Activated T-helper 2 cell treated with anti-CD3 and anti-CD28 coated beads, Interferon-gamma antibody, Interleukin-2, Interleukin-4, amounts not matched to agents 10 μg/mL and 5 μg/mL and 100 μg/mL, durations not matched to agents 14 hours and 24 hours and 36 hours (primary cell): ENCODE measurements at regions of chr15 and their contacts with region 1.

Region 1: DNA sequence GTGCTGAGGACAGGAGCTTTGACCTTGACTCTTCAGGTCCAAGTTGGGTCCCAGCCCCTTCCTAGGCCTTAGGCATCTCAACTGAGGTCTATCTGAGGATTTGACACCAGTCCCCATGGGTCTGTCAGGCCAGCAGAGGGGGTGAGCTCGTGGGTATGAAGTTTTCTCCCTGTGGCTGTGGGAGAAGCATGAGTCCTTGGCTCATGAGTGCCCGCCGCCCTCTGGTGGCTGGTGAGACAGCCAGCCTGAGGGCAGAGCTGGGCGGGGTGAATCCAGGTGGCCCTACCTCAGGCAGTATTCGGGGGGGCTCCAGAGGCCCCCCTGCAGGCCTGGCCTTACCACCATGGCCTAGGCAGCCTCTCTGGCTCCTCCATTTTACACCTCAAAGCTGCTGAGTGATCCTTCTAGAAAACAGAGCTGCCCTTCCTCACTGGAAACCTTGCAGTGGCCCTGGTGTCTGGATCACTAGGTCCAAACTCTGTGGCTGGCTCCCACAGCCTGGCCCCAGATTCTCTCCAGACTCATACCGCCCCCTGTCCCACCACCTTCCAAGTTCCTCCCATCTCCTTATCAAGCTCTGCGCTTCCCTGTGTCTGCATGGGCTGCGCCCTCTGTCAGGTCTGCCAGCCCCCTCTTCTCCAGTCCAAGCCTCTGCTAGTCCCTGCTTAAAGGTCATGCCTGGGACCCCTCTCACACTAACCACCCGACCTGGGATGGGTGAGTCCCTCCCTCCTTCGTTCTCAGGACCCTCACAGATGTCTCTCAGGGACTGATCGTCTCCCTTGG is 16.1 kb downstream of the SH2D7 start:
- DNase-seq: peak; percentile 75
- H3K4me3 Mint-ChIP-seq: no peak overlapping the region
- H3K27ac Mint-ChIP-seq: no peak overlapping the region
- H3K4me1 Mint-ChIP-seq: peaks cover 48% of the 10 kb centered on the region
- H3K27me3 Mint-ChIP-seq: no peaks in the 10 kb centered on the region

Region 2: DNA sequence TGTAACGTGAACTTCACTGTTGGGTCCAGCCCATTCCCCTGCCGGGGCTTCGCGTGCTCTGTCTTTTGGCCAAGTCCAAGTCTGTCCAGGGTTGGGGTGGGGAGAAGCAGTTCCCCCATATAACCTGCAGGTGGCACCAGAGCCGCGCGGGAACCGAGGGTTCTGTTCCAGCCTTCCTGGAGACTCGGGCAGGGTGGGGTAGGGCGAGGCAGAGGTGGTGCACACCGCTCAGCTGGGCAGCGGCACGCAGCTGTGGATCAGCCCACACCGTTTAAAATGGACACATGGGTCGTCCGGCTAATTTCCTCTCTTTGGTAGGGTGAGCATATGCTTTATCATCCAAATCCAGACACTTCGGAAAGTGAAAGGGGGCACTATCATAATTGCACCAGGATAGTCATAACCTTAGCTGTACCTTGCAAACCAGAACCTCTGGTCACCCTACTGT is 149.0 kb before region 1 on chr15:
- intact Hi-C with region 1: loop called (anchors 1 kb)
- DNase-seq: peak; percentile 67
- H3K4me3 Mint-ChIP-seq: no peak overlapping the region
- H3K27ac Mint-ChIP-seq: no peak overlapping the region
- H3K4me1 Mint-ChIP-seq: peaks cover 16% of the 10 kb centered on the region
- H3K27me3 Mint-ChIP-seq: peaks cover 44% of the 10 kb centered on the region

Region 3: GRCh38 chr15:78000091-78000926 is 108.2 kb before region 1 on chr15:
- intact Hi-C with region 1: loop called (anchors 1 kb)
- DNase-seq: peak; percentile 68
- H3K4me3 Mint-ChIP-seq: no peak overlapping the region
- H3K27ac Mint-ChIP-seq: no peak overlapping the region
- H3K4me1 Mint-ChIP-seq: peaks cover 12% of the 10 kb centered on the region
- H3K27me3 Mint-ChIP-seq: no peaks in the 10 kb centered on the region

Region 4: DNA sequence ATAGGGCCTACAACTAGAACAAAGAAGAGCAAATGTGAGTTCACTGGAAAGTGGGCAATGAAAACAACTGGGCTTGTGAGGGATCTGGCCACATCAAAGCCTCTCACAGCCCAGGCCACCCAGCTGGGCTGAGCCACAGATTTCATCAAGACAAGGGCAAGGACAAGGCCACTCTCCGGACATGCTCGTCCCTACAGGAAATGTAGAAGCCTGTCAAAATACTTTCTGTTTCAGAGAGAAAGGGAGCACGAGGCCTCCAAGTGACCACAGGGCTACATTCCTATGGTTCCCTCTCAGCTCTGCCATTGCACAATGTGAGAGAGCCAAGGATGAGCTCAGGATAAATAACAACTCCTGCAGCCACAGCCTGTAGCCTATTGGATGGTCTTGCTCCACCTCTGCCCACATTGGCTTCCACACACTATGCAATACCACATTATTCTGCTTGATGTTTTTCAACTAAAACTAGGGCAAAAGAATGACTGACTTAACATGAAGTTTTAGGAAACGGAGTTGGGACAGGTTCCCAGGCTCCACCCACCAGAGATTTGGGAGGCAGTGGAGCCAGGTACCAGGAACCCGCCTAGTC is 43.1 kb before region 1 on chr15:
- intact Hi-C with region 1: loop called (anchors 5 kb)
- DNase-seq: no peak
- H3K4me3 Mint-ChIP-seq: no peak overlapping the region
- H3K27ac Mint-ChIP-seq: peak overlapping the region; percentile 81
- H3K4me1 Mint-ChIP-seq: peaks cover 8% of the 10 kb centered on the region
- H3K27me3 Mint-ChIP-seq: no peaks in the 10 kb centered on the region

Region 5: DNA sequence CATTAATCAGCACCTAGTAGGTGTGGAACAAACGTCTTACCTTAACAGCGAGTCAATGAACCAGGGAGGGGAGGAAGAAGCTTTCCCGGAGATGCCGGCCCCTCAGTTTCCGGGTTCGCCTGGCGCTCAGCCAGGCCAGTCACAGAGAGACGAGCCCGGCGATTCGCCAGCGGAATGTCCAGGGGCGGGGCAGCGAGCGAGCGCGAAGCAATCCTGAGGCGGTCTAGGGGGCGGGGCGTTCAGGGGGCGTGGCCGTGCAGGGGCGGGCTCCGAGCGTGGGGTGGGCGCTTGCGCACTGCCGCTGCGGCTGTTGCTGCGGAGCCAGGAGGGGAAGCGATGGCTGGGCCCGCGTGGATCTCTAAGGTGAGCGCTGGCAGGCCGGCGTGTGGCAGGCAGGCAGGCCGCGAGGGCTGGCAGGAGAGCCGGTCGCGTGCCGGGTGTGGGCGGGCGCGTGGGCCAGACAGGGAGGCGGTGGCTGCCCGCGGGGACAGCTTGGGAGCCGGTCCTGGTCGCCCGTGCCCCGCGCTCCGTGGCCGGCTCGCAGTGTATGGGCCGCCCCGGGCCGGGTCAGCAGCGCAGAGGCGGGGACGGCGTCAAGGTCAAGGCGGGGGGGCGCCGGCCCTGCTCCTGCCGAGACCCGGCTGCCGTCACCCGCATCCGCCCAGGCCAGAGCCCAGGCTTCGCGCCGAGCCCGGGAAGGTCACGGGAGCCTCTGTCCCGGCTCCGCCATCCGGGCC is 40.7 kb after region 1 on chr15 and contains the start of gene IDH3A:
- intact Hi-C with region 1: loop called (anchors 2 kb)
- DNase-seq: peak; percentile 98
- H3K4me3 Mint-ChIP-seq: peak within 1 kb of the TSS; percentile 93
- H3K27ac Mint-ChIP-seq: peak within 1 kb of the TSS; percentile 84
- H3K4me1 Mint-ChIP-seq: peaks cover 39% of the 10 kb centered on the region
- H3K27me3 Mint-ChIP-seq: no peaks in the 10 kb centered on the region
- total RNA-seq, gene IDH3A: 132 and 152 TPM in 2 replicates

Region 6: GRCh38 chr15:78241007-78241406 is 132.5 kb after region 1 on chr15:
- intact Hi-C with region 1: loop called (anchors 1 kb)
- DNase-seq: peak; percentile 70
- H3K4me3 Mint-ChIP-seq: no peak overlapping the region
- H3K27ac Mint-ChIP-seq: no peak overlapping the region
- H3K4me1 Mint-ChIP-seq: peaks cover 3% of the 10 kb centered on the region
- H3K27me3 Mint-ChIP-seq: peaks cover 6% of the 10 kb centered on the region

Region 7: GRCh38 chr15:78263907-78264303 is 155.4 kb after region 1 on chr15:
- intact Hi-C with region 1: no loop called
- DNase-seq: no peak
- H3K4me3 Mint-ChIP-seq: peak overlapping the region; percentile 63
- H3K27ac Mint-ChIP-seq: peak overlapping the region; percentile 62
- H3K4me1 Mint-ChIP-seq: peaks cover 19% of the 10 kb centered on the region
- H3K27me3 Mint-ChIP-seq: no peaks in the 10 kb centered on the region